Aorta (tissue), 5 donors: ENCODE measurements at regions of chr9 and their contacts with region 1.

Region 1: DNA sequence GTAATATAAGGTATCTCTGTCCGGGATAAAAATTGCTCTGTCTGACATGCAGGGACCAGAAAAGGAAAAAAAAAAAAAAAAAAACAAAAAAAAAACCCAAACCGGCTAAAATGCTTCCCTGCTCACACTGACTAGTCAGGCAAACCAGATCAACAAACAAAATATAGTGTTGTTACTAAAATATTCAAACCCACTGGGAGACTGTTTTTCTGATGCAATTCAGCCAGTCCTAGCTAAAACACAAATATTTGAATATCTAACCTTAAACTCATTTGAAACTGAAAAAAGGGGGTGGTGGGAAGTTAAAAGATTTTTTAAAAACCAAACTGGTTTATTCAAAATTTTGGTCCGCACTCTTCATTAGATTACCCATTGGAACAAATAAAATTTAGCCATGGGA is 61.0 kb downstream of the APBA1 start:
- DNase-seq: no peak
- ATAC-seq: no peak
- H3K4me3 ChIP-seq: no peak overlapping the region
- H3K27ac ChIP-seq: no peak overlapping the region
- H3K4me1 ChIP-seq: no peaks in the 10 kb centered on the region
- H3K27me3 ChIP-seq: no peaks in the 10 kb centered on the region

Region 2: DNA sequence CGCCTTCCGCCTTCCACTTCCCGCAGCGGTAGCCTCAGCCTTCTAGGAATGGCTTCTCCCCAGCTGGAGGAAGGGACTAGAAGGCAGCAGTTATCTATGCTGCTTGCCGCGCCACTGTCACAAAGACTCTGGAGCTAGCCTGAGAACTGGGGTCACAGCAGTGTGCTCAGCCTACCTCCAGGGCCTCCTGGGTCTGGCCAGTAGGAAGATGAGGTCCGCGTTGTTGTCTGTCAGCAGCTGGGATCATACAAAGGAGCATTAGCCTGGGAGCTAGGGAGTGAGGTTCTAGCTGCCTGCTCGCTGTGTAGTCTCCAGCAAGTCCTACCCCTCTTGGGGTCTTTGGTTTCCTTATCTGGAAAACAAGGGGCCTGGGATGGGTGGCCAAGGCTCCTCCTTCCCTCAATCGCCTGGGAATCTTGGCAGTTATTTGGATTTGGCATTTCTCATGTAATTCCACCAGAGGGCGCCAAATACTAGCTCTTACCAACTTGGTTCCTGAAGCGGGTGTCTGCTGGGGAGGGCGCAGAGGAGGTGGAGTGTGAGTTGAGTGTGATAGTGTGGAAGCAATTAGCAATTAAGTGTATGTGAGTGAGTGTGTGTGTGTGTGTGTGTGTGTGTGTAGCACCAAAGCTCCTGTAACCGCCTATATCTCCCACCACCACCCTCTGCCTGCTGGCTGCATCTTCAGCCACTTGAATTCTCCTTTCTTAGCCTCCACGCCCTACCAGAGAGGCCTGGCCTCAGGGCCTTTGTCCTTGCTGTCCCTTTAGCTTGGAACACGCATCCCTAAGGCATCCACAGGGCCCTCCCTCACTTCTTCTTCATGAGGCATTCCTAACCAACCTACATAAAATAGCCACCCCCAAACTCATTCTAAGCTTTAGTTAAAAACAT is 189.1 kb before region 1 on chr9:
- intact Hi-C with region 1: no loop called
- DNase-seq: peak in 1 of 2 donors; percentile 51
- ATAC-seq: peak; percentile 89
- H3K4me3 ChIP-seq: no peak overlapping the region
- H3K27ac ChIP-seq: no peak overlapping the region
- H3K4me1 ChIP-seq: no peaks in the 10 kb centered on the region
- H3K27me3 ChIP-seq: no peaks in the 10 kb centered on the region

Region 3: GRCh38 chr9:69532396-69532795 is 78.8 kb before region 1 on chr9:
- intact Hi-C with region 1: loop called in 1 of 2 experiments (anchors 10 kb)
- DNase-seq: no peak
- ATAC-seq: no peak
- H3K4me3 ChIP-seq: no peak overlapping the region
- H3K27ac ChIP-seq: no peak overlapping the region
- H3K4me1 ChIP-seq: no peaks in the 10 kb centered on the region
- H3K27me3 ChIP-seq: no peaks in the 10 kb centered on the region